AG04449 (cell line): ENCODE measurements at regions of chr14 and their contacts with region 1.

Region 1: GRCh38 chr14:68911594-68912227 is 67.4 kb downstream of the ACTN1 start:
- DNase-seq: no peak
- H3K4me3 ChIP-seq: no peak overlapping the region
- CTCF ChIP-seq: peak; percentile 98

Region 2: GRCh38 chr14:68408680-68409079 is 503.0 kb before region 1 on chr14:
- CTCF ChIA-PET with region 1: no interaction called
- POLR2A ChIA-PET with region 1: no interaction called
- DNase-seq: no peak
- H3K4me3 ChIP-seq: no peak overlapping the region
- CTCF ChIP-seq: no peak

Region 3: GRCh38 chr14:68926236-68926635 is 14.5 kb after region 1 on chr14:
- CTCF ChIA-PET with region 1: interaction called, 69 read pairs
- POLR2A ChIA-PET with region 1: no interaction called
- DNase-seq: no peak
- H3K4me3 ChIP-seq: no peak overlapping the region
- CTCF ChIP-seq: peak; percentile 51

Region 4: GRCh38 chr14:68970038-68970612 is 58.4 kb after region 1 on chr14:
- CTCF ChIA-PET with region 1: interaction called, 20 read pairs
- POLR2A ChIA-PET with region 1: no interaction called
- DNase-seq: no peak
- H3K4me3 ChIP-seq: no peak overlapping the region
- CTCF ChIP-seq: no peak

Region 5: DNA sequence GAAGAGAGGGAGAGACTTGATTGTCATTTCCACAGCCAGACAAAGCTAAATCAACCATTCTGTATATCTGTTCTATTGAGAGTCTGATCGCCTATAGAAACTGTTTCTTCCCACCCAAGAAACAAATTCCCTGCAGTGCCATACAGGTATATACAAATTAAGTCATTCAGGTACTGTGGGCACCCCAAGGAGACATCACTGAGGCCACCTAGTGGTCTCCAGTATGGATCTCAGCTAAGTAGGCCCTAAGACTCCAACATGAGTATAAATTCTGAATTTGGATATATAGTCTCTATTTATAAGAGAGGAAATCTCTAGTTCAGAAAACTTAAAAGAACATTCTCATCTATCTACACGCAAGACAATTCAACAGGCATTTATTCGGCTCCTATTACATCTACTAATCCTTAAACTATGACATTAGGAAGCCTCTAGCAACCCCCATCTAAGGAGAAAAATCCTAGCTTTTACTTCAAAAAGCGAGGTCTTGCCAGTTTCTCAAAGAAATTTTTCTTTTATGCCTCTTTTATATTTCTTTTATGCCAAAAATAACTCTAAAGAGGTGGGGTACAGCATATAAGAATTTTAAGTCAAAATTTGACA is 178.6 kb after region 1 on chr14:
- CTCF ChIA-PET with region 1: interaction called, 50 read pairs
- POLR2A ChIA-PET with region 1: no interaction called
- DNase-seq: no peak
- H3K4me3 ChIP-seq: no peak overlapping the region
- CTCF ChIP-seq: peak; percentile 70